HCT116 (cell line): ENCODE measurements at regions of chr9 and their contacts with region 1.

Region 1: GRCh38 chr9:83062656-83063527 is at the start of gene RASEF:
- DNase-seq: no peak
- ATAC-seq: no peak
- H3K4me3 ChIP-seq: no peak within 1 kb of the TSS
- H3K27ac ChIP-seq: no peak within 1 kb of the TSS
- H3K4me1 ChIP-seq: no peaks in the 10 kb centered on the region
- H3K27me3 ChIP-seq: no peaks in the 10 kb centered on the region
- CTCF ChIP-seq: no peak
- POLR2A ChIP-seq: no peak
- RAD21 ChIP-seq: no peak
- total RNA-seq, gene RASEF: 0.12 TPM

Region 2: DNA sequence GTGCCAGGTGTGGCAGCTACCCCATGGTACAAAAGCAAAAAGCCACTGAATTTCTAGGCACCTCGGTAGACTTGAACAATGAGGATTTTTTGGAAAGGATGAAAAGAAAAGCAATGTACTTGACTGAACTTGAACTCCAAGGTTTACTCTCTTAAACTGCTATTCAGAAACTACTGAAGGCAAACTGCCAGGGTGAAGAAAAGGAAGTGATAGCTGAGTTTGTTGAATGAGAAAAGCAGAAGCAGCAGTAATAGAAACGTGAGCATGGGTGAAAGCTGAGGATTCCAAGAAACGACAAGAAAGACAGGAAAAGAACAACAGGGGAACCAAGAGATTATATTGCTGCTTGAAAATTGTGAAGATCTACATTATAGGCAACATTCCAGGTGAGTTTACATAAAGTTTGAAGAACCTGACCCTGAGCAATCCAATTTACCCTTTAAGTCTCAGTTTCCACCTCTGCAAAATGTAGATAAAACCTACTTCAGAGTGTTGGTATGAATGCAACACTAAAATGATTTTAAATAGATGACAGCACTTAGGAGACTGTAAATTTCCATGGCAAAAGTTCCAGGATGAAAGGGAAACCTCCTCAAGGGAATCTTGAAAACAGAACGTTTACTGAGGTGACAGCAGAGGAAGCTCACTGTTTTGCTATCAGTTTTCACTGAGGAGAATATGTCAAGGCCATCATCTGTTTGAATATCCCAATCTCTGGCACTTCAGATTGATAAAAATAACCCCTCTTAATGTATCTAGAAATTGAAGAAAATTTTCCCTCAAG is 828.5 kb before region 1 on chr9:
- CTCF ChIA-PET with region 1: no interaction called
- POLR2A ChIA-PET with region 1: no interaction called
- RAD21 ChIA-PET with region 1: no interaction called
- intact Hi-C with region 1: no loop called
- DNase-seq: no peak
- ATAC-seq: no peak
- H3K4me3 ChIP-seq: no peak overlapping the region
- H3K27ac ChIP-seq: no peak overlapping the region
- H3K4me1 ChIP-seq: no peaks in the 10 kb centered on the region
- H3K27me3 ChIP-seq: no peaks in the 10 kb centered on the region
- CTCF ChIP-seq: no peak
- POLR2A ChIP-seq: no peak
- RAD21 ChIP-seq: no peak

Region 3: DNA sequence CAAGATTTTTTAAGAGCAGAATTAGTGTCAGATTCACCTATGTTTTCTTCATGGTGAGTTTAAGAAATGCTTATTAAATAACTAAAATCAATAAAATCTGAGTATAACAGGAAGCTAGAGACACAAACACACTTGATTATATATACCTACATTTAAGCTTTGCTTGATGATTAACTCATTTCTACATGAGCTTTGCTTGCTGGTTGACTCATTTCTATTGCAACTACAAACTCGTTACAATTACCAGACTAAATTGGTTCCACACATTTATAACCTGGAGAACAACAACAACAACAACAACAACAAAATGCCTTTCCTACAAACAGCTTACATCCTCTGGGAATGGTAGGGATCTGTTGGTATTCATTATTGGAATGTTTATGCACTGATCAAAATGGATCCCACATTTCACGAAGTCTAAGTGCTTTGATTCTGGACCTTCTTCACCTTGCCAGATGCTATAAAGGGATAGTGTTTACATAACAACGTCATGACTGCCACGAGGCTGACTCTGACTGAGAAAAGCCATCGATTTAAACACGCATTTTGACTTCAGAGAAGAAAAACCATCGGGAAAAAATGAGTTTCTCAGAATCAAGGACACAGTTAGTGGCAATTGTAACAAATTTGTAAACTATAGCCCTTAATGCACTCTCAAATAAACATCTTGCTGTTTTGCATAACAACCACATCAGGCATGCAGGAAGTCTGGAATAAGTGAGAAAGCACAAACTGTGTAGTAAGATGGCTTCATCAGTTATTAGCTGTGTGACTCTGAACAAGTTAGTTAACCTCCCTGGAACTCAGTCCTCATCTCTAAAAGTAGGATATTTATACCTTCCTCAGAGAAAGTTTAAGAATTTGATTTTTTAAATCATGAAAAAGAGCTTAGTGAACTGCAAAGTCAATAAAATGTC is 49.7 kb before region 1 on chr9:
- CTCF ChIA-PET with region 1: no interaction called
- POLR2A ChIA-PET with region 1: no interaction called
- RAD21 ChIA-PET with region 1: no interaction called
- intact Hi-C with region 1: loop called (anchors 10 kb)
- DNase-seq: no peak
- ATAC-seq: no peak
- H3K4me3 ChIP-seq: no peak overlapping the region
- H3K27ac ChIP-seq: no peak overlapping the region
- H3K4me1 ChIP-seq: no peaks in the 10 kb centered on the region
- H3K27me3 ChIP-seq: no peaks in the 10 kb centered on the region
- CTCF ChIP-seq: no peak
- POLR2A ChIP-seq: no peak
- RAD21 ChIP-seq: no peak